ENCODE measurements at regions of chr13 and their contacts with region 1.

Region 1: GRCh38 chr13:110819203-110820014 is 95.5 kb downstream of the ANKRD10 start:
- DNase-seq: peak; percentile 81 to 86 (median 84)
- ATAC-seq: peak; percentile 95
- H3K4me3 ChIP-seq: no peak overlapping the region
- H3K27ac ChIP-seq: no peak overlapping the region
- H3K4me1 ChIP-seq: peaks cover 0 to 3% of the 10 kb centered on the region in 2 experiments; a peak in 2 of 5 replicates
- H3K27me3 ChIP-seq: peaks cover 0 to 6% of the 10 kb centered on the region in 2 experiments; a peak in 2 of 5 replicates
- CTCF ChIP-seq: peak; percentile 84 to 92 (median 87)
- EP300 ChIP-seq: no peak
- POLR2A ChIP-seq: no peak
- RAD21 ChIP-seq: peak; percentile 82 to 89

Region 2: DNA sequence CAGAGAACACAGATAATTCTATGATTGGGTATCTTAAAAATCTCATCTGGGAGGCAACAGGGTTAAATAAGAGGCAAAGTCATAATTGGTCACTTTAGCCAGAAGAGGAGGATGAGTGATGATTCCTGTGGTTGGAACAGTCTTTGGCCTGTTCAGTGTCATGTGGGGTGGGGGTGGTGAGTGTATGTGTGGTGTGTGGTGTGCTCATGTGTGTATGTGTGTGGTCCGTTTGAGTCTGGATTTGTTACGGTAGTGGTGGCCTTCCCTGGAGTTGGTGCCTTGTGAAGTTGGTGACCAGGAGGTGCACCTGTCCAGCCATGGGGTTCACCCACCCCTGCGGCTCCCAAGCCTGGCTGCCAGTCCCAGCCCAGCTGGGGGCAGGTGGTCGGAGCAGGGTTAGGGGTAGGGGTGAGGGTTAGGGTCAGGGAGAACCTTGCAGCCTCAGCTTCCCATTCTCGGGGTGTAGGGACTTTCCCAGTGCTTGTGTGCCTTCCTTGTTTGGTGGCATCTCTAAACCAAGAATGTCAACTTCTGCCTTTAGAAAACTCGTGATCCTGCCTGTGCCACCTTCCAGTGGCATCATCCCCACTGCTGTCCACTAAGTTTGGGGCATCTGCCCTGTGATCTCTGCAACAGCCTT is 355.4 kb before region 1 on chr13:
- CTCF ChIA-PET with region 1: no interaction called
- POLR2A ChIA-PET with region 1: no interaction called
- in situ Hi-C with region 1: loop called (anchors 10 kb)
- intact Hi-C with region 1: no loop called
- DNase-seq: no peak
- ATAC-seq: no peak
- H3K4me3 ChIP-seq: no peak overlapping the region
- H3K27ac ChIP-seq: no peak overlapping the region
- H3K4me1 ChIP-seq: peaks cover 2 to 17% of the 10 kb centered on the region in 2 experiments; a peak in 4 of 5 replicates
- H3K27me3 ChIP-seq: no peaks in the 10 kb centered on the region
- CTCF ChIP-seq: no peak
- EP300 ChIP-seq: no peak
- POLR2A ChIP-seq: no peak
- RAD21 ChIP-seq: no peak

Region 3: GRCh38 chr13:110593430-110594130 is 225.8 kb before region 1 on chr13:
- CTCF ChIA-PET with region 1: interaction called, 11 read pairs
- POLR2A ChIA-PET with region 1: no interaction called
- in situ Hi-C with region 1: loop called (anchors 10 kb)
- intact Hi-C with region 1: loop called (anchors 1 kb)
- DNase-seq: peak; percentile 32 to 77 (median 52)
- ATAC-seq: peak; percentile 96
- H3K4me3 ChIP-seq: no peak overlapping the region
- H3K27ac ChIP-seq: no peak overlapping the region
- H3K4me1 ChIP-seq: peaks cover 7% of the 10 kb centered on the region in 2 experiments; a peak in 4 of 5 replicates
- H3K27me3 ChIP-seq: no peaks in the 10 kb centered on the region
- CTCF ChIP-seq: peak; percentile 45 to 72 (median 52); a peak in 5 of 6 replicates
- EP300 ChIP-seq: 0 out of 2 replicates have a peak, but pooled peaks have one; percentile 6
- POLR2A ChIP-seq: no peak
- RAD21 ChIP-seq: peak; percentile 79

Region 4: DNA sequence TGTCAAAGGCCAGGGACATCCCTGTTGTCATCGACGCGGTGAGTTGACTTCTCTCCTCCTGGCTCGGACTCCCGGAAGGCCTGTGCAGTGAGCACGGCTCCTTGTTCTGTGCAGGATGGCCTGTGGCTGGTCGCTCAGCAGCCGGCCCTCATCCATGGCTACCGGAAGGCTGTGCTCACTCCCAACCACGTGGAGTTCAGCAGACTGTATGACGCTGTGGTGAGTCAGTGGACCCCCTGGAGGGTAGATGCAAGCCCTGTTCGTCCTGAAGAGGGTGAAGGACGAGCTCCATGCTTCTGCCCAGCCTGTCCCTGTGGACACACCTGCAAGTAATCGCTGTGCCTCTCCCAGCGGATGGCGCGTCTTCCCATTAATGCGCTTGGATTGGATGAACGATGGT is 184.9 kb before region 1 on chr13:
- CTCF ChIA-PET with region 1: no interaction called
- POLR2A ChIA-PET with region 1: no interaction called
- in situ Hi-C with region 1: no loop called
- intact Hi-C with region 1: no loop called
- DNase-seq: no peak
- ATAC-seq: no peak
- H3K4me3 ChIP-seq: no peak overlapping the region
- H3K27ac ChIP-seq: no peak overlapping the region
- H3K4me1 ChIP-seq: peaks cover 0 to 4% of the 10 kb centered on the region in 2 experiments; a peak in 2 of 5 replicates
- H3K27me3 ChIP-seq: no peaks in the 10 kb centered on the region
- CTCF ChIP-seq: no peak
- EP300 ChIP-seq: no peak
- POLR2A ChIP-seq: no peak
- RAD21 ChIP-seq: no peak

Region 5: DNA sequence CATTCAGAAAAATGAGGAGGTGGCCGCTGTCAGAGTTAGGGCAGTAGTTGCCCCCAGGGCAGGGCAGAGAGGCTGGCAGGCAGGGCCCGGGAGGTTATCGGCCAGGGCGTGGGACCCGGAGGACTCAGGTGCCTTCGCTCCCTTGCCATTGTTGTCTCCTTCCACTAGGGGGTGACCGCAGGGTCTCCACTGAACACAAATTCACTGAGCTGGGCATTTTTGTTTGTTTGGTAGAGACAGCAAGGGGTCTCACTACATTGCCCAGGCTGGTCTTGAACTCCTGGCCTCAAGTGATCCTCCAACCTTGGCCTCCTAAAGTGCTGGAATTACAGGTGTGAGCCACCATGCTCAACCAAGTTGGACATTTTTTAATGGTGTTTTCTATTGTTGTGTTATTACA is 138.6 kb before region 1 on chr13:
- CTCF ChIA-PET with region 1: no interaction called
- POLR2A ChIA-PET with region 1: no interaction called
- in situ Hi-C with region 1: no loop called
- intact Hi-C with region 1: loop called (anchors 5 kb)
- DNase-seq: peak; percentile 30 to 43 (median 37)
- ATAC-seq: peak; percentile 82
- H3K4me3 ChIP-seq: no peak overlapping the region
- H3K27ac ChIP-seq: no peak overlapping the region
- H3K4me1 ChIP-seq: no peaks in the 10 kb centered on the region; a peak in 1 of 5 replicates
- H3K27me3 ChIP-seq: no peaks in the 10 kb centered on the region
- CTCF ChIP-seq: peak; percentile 42 to 47 (median 42)
- EP300 ChIP-seq: no peak
- POLR2A ChIP-seq: no peak
- RAD21 ChIP-seq: peak in 1 of 2 experiments; percentile 26; a peak in 1 of 4 replicates

Region 6: DNA sequence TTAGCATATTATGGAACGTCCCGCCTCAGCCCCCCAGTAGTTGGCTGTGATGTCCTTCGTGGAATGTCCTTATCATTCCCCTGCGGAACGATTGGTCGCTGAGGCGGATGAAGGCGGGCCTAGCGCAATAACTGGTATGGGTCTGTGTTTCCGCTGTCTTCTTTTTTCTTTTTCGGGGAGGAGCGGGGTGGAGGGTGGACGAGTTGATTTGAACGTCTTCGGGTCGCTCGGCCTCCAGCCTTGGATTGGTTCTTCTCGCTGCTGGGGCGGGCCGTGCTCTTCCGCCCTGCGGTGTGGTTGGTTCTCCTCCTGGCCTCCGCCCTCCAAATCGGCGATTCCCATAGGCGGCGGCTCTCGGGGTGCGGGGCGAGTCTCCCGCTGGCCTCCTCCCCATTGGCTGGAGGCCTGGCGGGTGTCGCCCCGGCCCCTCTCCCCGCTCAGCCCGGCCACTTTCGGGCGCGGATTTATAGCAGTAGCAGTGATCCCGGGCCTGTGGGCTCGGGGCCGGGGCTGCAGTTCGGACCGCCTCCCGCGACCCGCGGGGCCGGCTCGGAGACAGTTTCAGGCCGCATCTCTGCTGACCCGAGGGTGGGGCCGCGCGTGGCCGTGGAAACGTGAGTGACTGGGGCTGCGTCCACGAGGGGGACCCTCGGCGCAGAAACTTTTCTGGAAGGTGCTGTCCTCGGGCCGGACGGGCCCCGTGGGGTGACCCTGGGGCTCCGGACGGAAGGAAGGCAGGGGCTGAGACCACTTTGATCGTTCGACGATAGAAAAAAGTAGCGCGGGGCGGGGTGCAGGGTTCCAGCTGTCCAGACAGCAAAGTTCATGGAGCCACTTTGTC is 103.8 kb before region 1 on chr13:
- CTCF ChIA-PET with region 1: interaction called, 3 read pairs
- POLR2A ChIA-PET with region 1: no interaction called
- in situ Hi-C with region 1: no loop called
- intact Hi-C with region 1: loop called (anchors 10 kb)
- DNase-seq: peak; percentile 88 to 95 (median 90)
- ATAC-seq: peak; percentile 81
- H3K4me3 ChIP-seq: peak overlapping the region; percentile 86
- H3K27ac ChIP-seq: peak overlapping the region; percentile 68
- H3K4me1 ChIP-seq: peaks cover 2 to 26% of the 10 kb centered on the region in 2 experiments; a peak in 2 of 5 replicates
- H3K27me3 ChIP-seq: no peaks in the 10 kb centered on the region
- CTCF ChIP-seq: 0 out of 6 replicates have a peak, but pooled peaks of 1 of the 3 experiments have one; percentile 24
- EP300 ChIP-seq: no peak
- POLR2A ChIP-seq: no peak
- RAD21 ChIP-seq: no peak

Region 7: GRCh38 chr13:111046590-111047141 is 227.3 kb after region 1 on chr13:
- CTCF ChIA-PET with region 1: no interaction called
- POLR2A ChIA-PET with region 1: no interaction called
- in situ Hi-C with region 1: loop called (anchors 25 kb)
- intact Hi-C with region 1: no loop called
- DNase-seq: peak; percentile 25 to 73 (median 38)
- ATAC-seq: peak; percentile 74
- H3K4me3 ChIP-seq: no peak overlapping the region
- H3K27ac ChIP-seq: peak overlapping the region; percentile 64; the same call in 2 of the 3 replicates
- H3K4me1 ChIP-seq: peaks cover 13 to 26% of the 10 kb centered on the region in 2 experiments
- H3K27me3 ChIP-seq: no peaks in the 10 kb centered on the region
- CTCF ChIP-seq: peak; percentile 17 to 41 (median 36); a peak in 3 of 6 replicates
- EP300 ChIP-seq: peak; percentile 45; the same call in 1 of the 2 replicates
- POLR2A ChIP-seq: no peak
- RAD21 ChIP-seq: peak in 1 of 2 experiments; percentile 30; a peak in 2 of 4 replicates